Dorsolateral prefrontal cortex (tissue), 120 donors: ENCODE measurements at regions of chr20 and their contacts with region 1.

Region 1: GRCh38 chr20:740141-740540 is 28.2 kb downstream of the SLC52A3 start:
- DNase-seq: no peak
- H3K4me3 ChIP-seq: no peak overlapping the region
- H3K27ac ChIP-seq: peak overlapping the region in 22 of 59 donors; percentile 15 to 75 (median 43)
- H3K27me3 ChIP-seq: no peaks in the 10 kb centered on the region
- CTCF ChIP-seq: no peak

Region 2: GRCh38 chr20:561437-562231 is 178.5 kb before region 1 on chr20:
- intact Hi-C with region 1: loop called (anchors 2 to 5 kb)
- DNase-seq: peak in 8 of 10 donors; percentile 56 to 81 (median 71)
- H3K4me3 ChIP-seq: no peak overlapping the region
- H3K27ac ChIP-seq: no peak overlapping the region
- H3K27me3 ChIP-seq: peaks cover 0 to 6% (median 0%) of the 10 kb centered on the region in 45 donors
- CTCF ChIP-seq: peak; percentile 84 to 99 (median 95)

Region 3: GRCh38 chr20:699811-700338 is 40.3 kb before region 1 on chr20:
- intact Hi-C with region 1: no loop called
- DNase-seq: peak in 7 of 10 donors; percentile 30 to 95 (median 62)
- H3K4me3 ChIP-seq: no peak overlapping the region
- H3K27ac ChIP-seq: peak overlapping the region in 4 of 59 donors; percentile 10 to 58 (median 30)
- H3K27me3 ChIP-seq: peaks cover 0 to 3% (median 0%) of the 10 kb centered on the region in 45 donors
- CTCF ChIP-seq: no peak